ENCODE measurements at regions of chr1 and their contacts with region 1.

Region 1: DNA sequence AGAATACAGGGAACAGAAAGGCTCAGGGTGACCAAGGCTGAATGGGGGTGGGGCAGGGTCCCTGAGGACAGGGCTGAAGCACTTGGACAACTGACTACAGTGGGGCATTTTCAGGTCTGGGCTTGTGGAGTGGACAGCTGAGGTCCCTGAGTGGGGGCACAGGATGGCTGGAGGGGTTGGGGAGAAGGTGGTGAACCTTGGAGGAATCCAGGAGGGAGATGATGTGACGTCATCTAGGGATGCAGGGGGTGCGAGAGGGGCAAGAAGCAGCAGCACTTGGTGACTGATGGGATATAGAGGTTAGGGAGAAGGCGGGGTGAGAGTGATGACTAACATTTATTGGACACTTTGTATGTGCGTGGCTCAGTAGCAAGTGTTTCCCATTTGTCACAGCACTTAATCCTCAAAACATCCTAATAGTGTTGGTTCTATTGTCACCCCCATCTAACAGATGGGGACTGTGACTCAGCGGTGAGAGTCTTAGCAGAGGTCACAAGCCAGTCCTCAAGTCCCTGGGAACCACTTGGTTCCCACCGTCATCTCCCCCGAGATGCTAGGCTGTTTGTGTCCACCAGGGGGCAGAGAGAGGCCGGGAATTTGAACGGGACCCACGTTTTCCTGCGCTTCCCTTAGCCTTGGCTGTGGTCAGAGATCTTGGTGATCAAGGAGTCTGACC is 27.9 kb upstream of the BMP8B start:
- DNase-seq: peak; percentile 76
- H3K4me3 ChIP-seq: no peak overlapping the region
- H3K27ac ChIP-seq: no peak overlapping the region
- H3K4me1 ChIP-seq: no peaks in the 10 kb centered on the region
- H3K27me3 ChIP-seq: no peaks in the 10 kb centered on the region
- CTCF ChIP-seq: peak; percentile 75

Region 2: DNA sequence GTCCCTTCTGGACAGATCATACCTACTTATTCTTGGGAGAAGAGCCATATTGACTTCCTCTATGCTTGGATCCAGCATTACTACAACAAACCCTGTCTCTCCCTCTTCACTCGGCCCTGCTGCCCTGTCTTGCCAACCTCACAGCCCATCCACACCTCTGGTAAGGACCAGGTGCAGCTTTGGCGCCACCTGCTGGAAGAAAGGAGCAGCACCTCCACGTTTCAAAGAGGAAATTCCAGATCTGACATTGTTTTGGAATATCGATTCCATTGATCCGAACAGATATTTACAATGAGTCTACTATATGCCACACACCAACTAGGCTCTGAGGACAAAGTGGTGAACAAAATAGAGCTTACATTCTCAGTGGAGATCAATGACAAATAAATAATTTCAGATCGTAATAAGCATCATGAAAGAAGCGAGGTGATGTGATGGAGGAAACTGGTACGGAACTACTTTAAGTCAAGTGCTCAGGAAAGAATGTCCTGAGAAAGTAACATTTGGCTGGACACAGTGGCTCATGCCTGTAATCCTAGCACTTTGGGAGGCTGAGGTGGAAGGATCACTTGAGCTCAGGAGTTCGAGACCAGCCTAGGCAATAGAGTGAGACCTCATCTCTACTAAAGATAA is 157.1 kb after region 1 on chr1:
- CTCF ChIA-PET with region 1: interaction called, 6 read pairs
- POLR2A ChIA-PET with region 1: no interaction called
- intact Hi-C with region 1: loop called (anchors 1 kb)
- DNase-seq: peak; percentile 75
- H3K4me3 ChIP-seq: no peak overlapping the region
- H3K27ac ChIP-seq: no peak overlapping the region
- H3K4me1 ChIP-seq: no peaks in the 10 kb centered on the region
- H3K27me3 ChIP-seq: no peaks in the 10 kb centered on the region
- CTCF ChIP-seq: peak; percentile 99

Region 3: DNA sequence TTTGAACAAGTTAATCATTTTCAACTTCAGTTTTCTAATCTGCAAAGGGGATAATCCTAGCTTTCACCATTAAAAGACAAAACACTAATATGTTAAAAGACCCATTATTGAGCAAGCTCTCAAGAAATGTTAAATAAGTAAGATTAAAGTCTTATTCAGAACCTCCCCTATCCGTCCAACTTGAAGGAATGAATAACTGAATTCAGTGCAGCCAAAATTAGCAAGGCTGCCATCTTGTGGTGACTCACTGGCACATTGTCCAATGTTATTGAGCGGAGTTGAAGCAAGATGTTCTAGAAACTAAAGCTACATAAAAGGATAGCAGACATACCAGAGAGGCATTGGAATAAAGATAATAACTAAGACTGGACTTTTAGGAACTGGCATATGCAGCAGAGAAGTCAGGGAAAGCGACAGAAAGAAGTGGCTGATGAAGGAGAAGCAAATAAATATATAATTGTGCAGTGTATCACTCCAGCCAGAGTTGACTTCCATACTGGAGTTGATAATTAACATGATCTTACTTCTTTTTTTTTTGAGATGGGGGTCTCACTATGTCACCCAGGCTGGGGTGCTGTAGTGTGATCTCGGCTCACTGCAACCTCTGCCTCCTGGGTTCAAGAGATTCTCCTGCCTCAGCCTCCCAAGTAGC is 215.8 kb after region 1 on chr1:
- CTCF ChIA-PET with region 1: interaction called, 5 read pairs
- POLR2A ChIA-PET with region 1: no interaction called
- intact Hi-C with region 1: loop called (anchors 2 kb)
- DNase-seq: peak; percentile 63
- H3K4me3 ChIP-seq: no peak overlapping the region
- H3K27ac ChIP-seq: no peak overlapping the region
- H3K4me1 ChIP-seq: no peaks in the 10 kb centered on the region
- H3K27me3 ChIP-seq: no peaks in the 10 kb centered on the region
- CTCF ChIP-seq: peak; percentile 87